PC-9 (cell line): ENCODE measurements at regions of chr4 and their contacts with region 1.

Region 1: DNA sequence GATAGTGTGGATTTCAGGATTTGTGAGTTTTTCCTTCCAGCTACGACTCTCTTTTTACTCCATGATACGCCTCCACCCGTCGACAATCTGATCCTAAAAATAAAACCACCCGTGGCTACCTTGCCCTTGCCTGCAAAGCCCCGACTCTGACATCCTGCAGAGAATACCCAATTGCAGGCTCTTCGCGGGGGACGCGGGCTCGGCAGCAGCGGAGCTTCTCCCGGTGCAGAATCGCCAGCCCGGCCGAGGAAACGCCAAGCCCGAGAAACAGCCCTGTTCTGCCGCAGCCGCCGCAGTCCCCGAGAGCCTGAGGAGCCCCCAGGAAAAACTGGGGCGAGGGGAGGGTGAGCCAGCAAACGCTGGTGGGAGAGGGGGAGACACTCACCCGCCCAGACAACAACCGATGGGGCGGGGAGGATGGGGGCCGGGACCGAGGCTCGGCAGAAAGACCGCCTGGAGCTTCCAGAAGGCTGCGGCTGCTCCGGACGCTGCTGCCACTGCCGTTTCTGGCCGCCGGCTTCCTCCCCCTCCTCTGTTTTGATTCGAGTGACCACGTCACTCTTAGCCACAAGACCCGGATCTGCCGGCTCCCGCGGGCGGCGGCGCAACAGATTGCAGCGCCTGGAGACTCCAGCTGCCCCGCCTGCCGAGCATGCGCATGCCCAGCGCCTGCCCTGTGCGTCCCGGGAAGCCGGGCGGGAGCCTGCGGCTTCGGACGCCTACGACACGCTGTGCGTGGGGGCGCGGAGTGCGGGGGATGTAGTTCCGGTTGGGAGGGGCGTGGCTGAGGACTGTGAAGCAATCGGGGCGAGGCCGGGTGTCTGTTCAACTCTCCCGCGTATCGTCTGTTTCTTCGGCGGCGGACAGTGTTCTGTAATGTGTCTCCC is at the start of gene SMIM14:
- DNase-seq: peak; percentile 90 to 99
- H3K4me3 ChIP-seq: peak within 1 kb of the TSS; percentile 79
- H3K27ac ChIP-seq: peak within 1 kb of the TSS; percentile 93
- H3K4me1 ChIP-seq: peaks cover 34% of the 10 kb centered on the region
- H3K27me3 ChIP-seq: no peaks in the 10 kb centered on the region
- CTCF ChIP-seq: no peak
- total RNA-seq, gene SMIM14: 64.1 and 71.2 TPM in 2 replicates

Region 2: GRCh38 chr4:39469429-39470077 is 169.0 kb before region 1 on chr4:
- CTCF ChIA-PET with region 1: no interaction called
- POLR2A ChIA-PET with region 1: no interaction called
- intact Hi-C with region 1: loop called (anchors 5 kb)
- DNase-seq: peak; percentile 52 to 77
- H3K4me3 ChIP-seq: no peak overlapping the region
- H3K27ac ChIP-seq: peak overlapping the region; percentile 65
- H3K4me1 ChIP-seq: peaks cover 9% of the 10 kb centered on the region
- H3K27me3 ChIP-seq: no peaks in the 10 kb centered on the region
- CTCF ChIP-seq: peak; percentile 93

Region 3: GRCh38 chr4:39609454-39609931 is 29.1 kb before region 1 on chr4:
- CTCF ChIA-PET with region 1: interaction called, 3 read pairs
- POLR2A ChIA-PET with region 1: interaction called, 10 read pairs
- intact Hi-C with region 1: no loop called
- DNase-seq: no peak
- H3K4me3 ChIP-seq: no peak overlapping the region
- H3K27ac ChIP-seq: peak overlapping the region; percentile 41; the same call in 1 of the 2 replicates
- H3K4me1 ChIP-seq: peaks cover 44% of the 10 kb centered on the region
- H3K27me3 ChIP-seq: no peaks in the 10 kb centered on the region
- CTCF ChIP-seq: no peak

Region 4: GRCh38 chr4:39697740-39698423 is 59.3 kb after region 1 on chr4 and contains the start of gene UBE2K:
- CTCF ChIA-PET with region 1: no interaction called
- POLR2A ChIA-PET with region 1: interaction called, 4 read pairs
- intact Hi-C with region 1: loop called (anchors 2 kb)
- DNase-seq: peak; percentile 73 to 91
- H3K4me3 ChIP-seq: peak within 1 kb of the TSS; percentile 78
- H3K27ac ChIP-seq: peak within 1 kb of the TSS; percentile 71
- H3K4me1 ChIP-seq: peaks cover 31% of the 10 kb centered on the region
- H3K27me3 ChIP-seq: no peaks in the 10 kb centered on the region
- CTCF ChIP-seq: no peak
- total RNA-seq, gene UBE2K: 89.4 and 129 TPM in 2 replicates

Region 5: DNA sequence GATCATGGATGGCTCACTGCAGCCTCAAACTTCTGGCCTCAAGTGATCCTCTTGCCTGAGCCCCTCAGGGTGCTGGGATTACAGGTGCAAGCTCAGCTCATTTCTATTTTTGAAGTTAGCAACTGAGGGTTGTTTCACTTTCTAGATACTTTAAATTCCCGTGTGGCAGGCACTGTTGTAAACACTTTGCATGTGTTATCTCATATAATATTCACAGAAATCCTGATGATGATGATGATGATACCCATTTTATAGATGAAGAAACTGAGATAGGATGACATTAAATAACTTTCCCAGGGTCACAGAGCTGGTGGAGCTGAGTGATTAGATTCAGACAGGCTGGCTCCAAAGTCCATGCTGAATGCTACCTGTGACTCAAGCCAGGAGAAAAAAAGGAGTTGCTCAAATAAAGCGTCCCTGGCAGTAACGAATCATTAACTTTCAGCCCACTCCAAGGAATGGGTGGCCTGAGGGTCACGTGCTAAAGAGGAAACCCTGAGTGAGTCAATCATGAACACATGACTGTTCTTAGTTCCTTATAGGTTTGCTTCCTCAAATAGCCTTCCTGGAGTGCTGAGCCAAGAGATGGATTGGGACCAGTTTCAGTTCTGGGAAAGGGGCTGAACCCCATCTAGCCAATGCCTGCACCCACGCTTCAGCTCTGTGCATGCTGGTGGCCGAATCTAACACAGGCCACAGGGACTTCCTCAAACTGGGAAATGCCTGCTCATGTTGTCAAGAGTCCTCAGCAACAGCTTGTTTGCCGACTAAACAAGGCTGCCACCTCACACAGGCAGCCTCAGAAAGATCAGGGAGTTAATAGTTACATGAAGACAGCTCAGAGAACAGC is 938.3 kb after region 1 on chr4:
- CTCF ChIA-PET with region 1: no interaction called
- POLR2A ChIA-PET with region 1: interaction called, 16 read pairs
- intact Hi-C with region 1: no loop called
- DNase-seq: peak; percentile 76 to 97
- H3K4me3 ChIP-seq: peak overlapping the region; percentile 28; the same call in 1 of the 2 replicates
- H3K27ac ChIP-seq: peak overlapping the region; percentile 81
- H3K4me1 ChIP-seq: peaks cover 49% of the 10 kb centered on the region
- H3K27me3 ChIP-seq: no peaks in the 10 kb centered on the region
- CTCF ChIP-seq: no peak

Region 6: DNA sequence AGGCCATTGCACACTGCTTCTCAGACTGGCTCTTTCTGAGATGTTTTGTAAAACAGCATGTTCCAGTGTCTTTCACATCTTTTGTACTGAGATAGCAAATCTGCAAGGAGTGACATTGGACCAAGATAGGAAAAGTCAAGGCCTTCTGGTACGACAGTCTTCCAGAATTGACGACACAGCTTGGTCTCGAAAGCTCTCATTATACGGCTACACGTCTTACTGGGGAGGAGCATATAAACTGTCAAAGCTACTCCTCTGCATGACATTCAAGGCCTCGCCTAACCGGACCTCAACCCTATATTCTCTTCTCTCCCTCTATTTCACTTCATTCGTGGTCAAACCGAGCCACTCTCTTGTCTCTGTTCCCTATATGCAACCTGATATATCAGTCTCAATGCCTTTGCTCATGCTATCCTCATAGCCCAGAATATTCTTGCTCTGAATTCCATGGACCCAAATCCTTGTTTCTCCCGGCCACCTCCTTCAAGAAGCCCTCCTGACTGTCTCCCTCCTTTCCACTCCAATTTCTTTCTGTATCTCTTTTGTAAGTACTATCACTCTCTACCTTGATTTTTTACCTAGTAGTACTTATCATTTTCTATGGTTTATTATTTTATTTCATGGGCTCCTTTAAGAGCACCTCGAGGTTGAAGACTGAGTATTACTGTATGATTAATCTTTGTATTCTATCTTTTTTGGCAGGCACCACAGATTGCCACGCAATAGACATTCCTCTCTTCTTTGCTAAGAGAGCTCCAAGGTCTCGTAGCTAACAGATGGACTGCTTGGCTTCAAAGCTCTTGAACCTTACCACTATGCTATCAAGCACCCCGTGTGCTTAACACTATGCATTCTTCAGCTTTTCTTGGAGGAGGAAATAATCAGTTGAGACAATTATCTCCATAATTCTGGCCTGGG is 955.9 kb after region 1 on chr4:
- CTCF ChIA-PET with region 1: no interaction called
- POLR2A ChIA-PET with region 1: no interaction called
- intact Hi-C with region 1: no loop called
- DNase-seq: no peak
- H3K4me3 ChIP-seq: no peak overlapping the region
- H3K27ac ChIP-seq: no peak overlapping the region
- H3K4me1 ChIP-seq: 0 out of 2 replicates have a peak, but pooled peaks cover 5% of the 10 kb centered on the region
- H3K27me3 ChIP-seq: no peaks in the 10 kb centered on the region
- CTCF ChIP-seq: no peak